GM10248 (cell line): ENCODE measurements at regions of chr9 and their contacts with region 1.

Region 1: GRCh38 chr9:72443855-72444254 is 77.6 kb upstream of the TMC1 start:
- DNase-seq: peak; percentile 72
- CTCF ChIP-seq: no peak

Region 2: GRCh38 chr9:72364679-72365524 is 79.0 kb before region 1 on chr9 and contains the start of gene ZFAND5:
- CTCF ChIA-PET with region 1: interaction called, 8 read pairs
- POLR2A ChIA-PET with region 1: interaction called, 14 read pairs
- DNase-seq: peak; percentile 97
- CTCF ChIP-seq: no peak

Region 3: GRCh38 chr9:72464857-72465592 is 21.2 kb after region 1 on chr9:
- CTCF ChIA-PET with region 1: interaction called, 25 read pairs
- POLR2A ChIA-PET with region 1: no interaction called
- DNase-seq: no peak
- CTCF ChIP-seq: no peak

Region 4: DNA sequence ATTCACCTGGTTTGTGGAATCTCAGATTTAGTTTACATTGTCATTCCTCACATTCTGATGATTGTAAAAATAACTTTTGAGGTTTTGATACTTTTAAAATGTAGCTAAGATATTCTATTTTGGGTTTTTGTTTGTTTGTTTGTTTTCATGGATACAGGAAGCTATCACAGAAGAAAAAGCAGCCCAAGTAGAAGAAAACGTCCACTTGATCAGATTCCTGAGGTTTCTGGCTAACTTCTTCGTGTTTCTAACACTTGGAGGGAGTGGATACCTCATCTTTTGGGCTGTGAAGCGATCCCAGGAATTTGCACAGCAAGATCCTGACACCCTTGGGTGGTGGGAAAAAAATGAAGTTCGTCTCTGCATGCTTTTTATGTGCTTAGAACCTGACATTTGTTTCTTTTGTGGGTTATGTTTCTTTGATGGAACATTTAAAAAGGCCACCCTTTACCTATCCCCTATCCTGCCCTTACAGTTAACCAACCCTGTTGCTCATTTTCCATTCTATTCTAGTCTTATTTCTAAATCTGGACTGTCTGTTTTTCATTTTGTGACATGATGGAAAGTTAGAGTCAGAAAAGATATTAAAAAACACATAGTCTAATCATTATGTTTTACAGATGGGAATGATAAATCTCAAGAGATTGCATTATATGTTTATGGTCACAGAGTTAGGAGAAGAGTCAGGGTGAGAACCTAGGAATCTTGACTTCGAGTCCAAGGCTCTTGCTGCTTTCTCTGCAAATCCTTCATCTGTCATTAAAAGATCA is 345.3 kb after region 1 on chr9:
- CTCF ChIA-PET with region 1: no interaction called
- POLR2A ChIA-PET with region 1: no interaction called
- DNase-seq: no peak
- CTCF ChIP-seq: no peak